A673 (cell line): ENCODE measurements at regions of chr10 and their contacts with region 1.

Region 1: GRCh38 chr10:114221235-114221789 is 17.7 kb upstream of the VWA2 start:
- DNase-seq: no peak
- H3K4me3 ChIP-seq: no peak overlapping the region
- H3K27ac ChIP-seq: no peak overlapping the region
- H3K4me1 ChIP-seq: no peaks in the 10 kb centered on the region
- H3K27me3 ChIP-seq: peaks cover 95% of the 10 kb centered on the region
- CTCF ChIP-seq: no peak

Region 2: GRCh38 chr10:114157909-114158308 is 63.4 kb before region 1 on chr10:
- CTCF ChIA-PET with region 1: no interaction called
- POLR2A ChIA-PET with region 1: interaction called, 11 read pairs
- intact Hi-C with region 1: no loop called
- DNase-seq: peak; percentile 43
- H3K4me3 ChIP-seq: no peak overlapping the region
- H3K27ac ChIP-seq: no peak overlapping the region
- H3K4me1 ChIP-seq: no peaks in the 10 kb centered on the region
- H3K27me3 ChIP-seq: no peaks in the 10 kb centered on the region
- CTCF ChIP-seq: 0 out of 2 replicates have a peak, but pooled peaks have one; percentile 22